Naive thymus-derived CD8-positive, alpha-beta T cell (primary cell): ENCODE measurements at regions of chr17 and their contacts with region 1.

Region 1: DNA sequence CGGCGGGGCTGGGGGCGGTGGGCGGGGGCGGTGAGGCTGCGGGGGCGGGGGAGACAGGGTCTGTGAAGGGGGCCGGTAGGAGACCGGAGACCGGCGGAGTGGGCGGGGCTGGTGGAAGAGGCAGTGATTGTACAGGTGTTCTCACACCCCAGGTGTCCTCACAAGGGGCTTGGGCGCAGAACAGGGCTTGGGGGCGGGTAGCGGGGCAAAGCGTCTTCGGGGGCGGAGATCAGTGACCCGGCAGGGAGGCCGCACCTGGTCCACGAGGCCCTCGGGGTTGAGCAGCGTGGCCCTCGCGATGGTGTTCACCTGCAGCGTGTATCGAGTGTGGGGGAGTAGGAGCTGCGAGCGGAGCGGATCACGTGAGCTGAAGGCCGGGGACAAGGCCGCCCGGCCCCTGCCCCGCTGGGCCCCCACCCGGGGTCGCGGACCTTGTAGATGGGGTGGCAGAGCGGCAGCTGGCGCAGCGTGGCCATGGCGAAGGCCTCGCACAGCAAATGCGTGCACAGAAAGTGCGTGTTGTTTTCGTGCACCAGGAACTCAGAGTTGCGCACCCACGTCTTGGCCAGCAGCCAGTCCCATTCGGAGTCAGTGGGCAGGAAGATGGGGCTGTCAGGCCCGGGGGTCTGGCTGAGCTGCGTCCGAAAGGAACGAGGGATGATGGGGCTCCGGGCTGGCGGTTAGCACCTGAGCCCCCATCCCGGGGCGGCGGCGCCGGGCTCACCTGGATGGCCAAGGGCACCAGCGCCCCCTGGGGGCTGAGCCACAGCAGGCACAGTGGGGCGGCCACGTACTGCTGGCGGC is 8.5 kb downstream of the ALOXE3 start:
- DNase-seq: peak; percentile 72 to 94 (median 84)
- ATAC-seq: peak; percentile 98 to 99
- H3K4me3 Mint-ChIP-seq: peak overlapping the region; percentile 36 to 84 (median 67)
- H3K27ac Mint-ChIP-seq: peak overlapping the region in 6 of 10 donors; percentile 38 to 89 (median 69)
- H3K4me1 Mint-ChIP-seq: peaks cover 0 to 8% (median 6%) of the 10 kb centered on the region in 4 donors
- H3K27me3 Mint-ChIP-seq: peaks cover 8 to 25% (median 18%) of the 10 kb centered on the region in 5 donors

Region 2: GRCh38 chr17:8079291-8080207 is 30.3 kb before region 1 on chr17:
- POLR2A ChIA-PET with region 1: interaction called, 15 read pairs
- DNase-seq: peak; percentile 72 to 90 (median 80)
- ATAC-seq: peak; percentile 87 to 91
- H3K4me3 Mint-ChIP-seq: peak overlapping the region; percentile 85 to 95 (median 90)
- H3K27ac Mint-ChIP-seq: peak overlapping the region in 9 of 10 donors; percentile 56 to 93 (median 85)
- H3K4me1 Mint-ChIP-seq: peaks cover 18 to 20% (median 18%) of the 10 kb centered on the region in 4 donors
- H3K27me3 Mint-ChIP-seq: peaks cover 0 to 10% (median 6%) of the 10 kb centered on the region in 5 donors

Region 3: GRCh38 chr17:8091033-8091687 is 18.7 kb before region 1 on chr17:
- POLR2A ChIA-PET with region 1: interaction called, 24 read pairs
- DNase-seq: no peak
- ATAC-seq: no peak
- H3K4me3 Mint-ChIP-seq: peak overlapping the region in 1 of 10 donors; percentile 47
- H3K27ac Mint-ChIP-seq: peak overlapping the region in 2 of 10 donors; percentile 21 to 24
- H3K4me1 Mint-ChIP-seq: peaks cover 6 to 19% (median 12%) of the 10 kb centered on the region in 4 donors
- H3K27me3 Mint-ChIP-seq: peaks cover 16 to 46% (median 21%) of the 10 kb centered on the region in 5 donors

Region 4: DNA sequence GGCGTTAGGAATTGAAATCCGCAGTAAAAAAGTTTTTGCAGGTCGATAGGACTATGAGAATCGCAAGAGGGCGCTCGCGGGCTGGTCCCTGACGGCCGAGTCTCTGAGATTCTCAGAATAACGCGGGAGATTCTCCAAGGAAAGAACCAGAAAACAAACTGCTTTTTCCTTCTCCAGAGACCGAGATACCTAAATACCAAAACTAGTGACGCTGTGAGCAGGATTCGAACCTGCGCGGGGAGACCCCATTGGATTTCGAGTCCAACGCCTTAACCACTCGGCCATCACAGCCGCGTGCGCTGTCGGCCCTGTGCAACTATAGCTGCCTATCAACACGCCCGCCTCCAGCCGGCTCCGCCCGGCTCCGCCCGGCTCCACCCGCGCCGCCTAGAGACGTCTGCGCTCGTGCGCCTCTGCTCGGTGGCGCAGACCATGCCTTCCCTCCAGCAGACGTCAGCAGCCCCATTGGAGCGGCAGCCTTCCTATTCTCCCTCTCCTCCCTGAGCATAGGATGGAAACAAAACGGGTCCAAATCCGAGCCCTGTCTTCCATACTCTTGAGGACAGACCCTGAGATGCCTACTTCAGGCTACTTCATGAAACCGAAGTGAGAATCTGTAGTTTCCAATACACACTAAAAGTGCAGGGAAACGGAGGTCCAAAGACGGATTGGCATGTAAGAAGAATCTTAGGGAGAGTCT is 29.0 kb after region 1 on chr17:
- POLR2A ChIA-PET with region 1: no interaction called
- DNase-seq: peak; percentile 87 to 99 (median 97)
- ATAC-seq: peak; percentile 86 to 87
- H3K4me3 Mint-ChIP-seq: no peak overlapping the region
- H3K27ac Mint-ChIP-seq: no peak overlapping the region
- H3K4me1 Mint-ChIP-seq: peaks cover 0 to 18% (median 7%) of the 10 kb centered on the region in 4 donors
- H3K27me3 Mint-ChIP-seq: peaks cover 0 to 5% (median 0%) of the 10 kb centered on the region in 5 donors